K562 (cell line): ENCODE measurements at regions of chr9 and their contacts with region 1.

Region 1: GRCh38 chr9:92133949-92134604 is 18.9 kb upstream of the SPTLC1 start:
- DNase-seq: peak; percentile 83 to 87 (median 86)
- ATAC-seq: peak; percentile 84
- H3K4me3 ChIP-seq: no peak overlapping the region
- H3K27ac ChIP-seq: no peak overlapping the region
- H3K4me1 ChIP-seq: peaks cover 0 to 24% of the 10 kb centered on the region in 2 experiments; a peak in 4 of 5 replicates
- H3K27me3 ChIP-seq: peaks cover 0 to 10% of the 10 kb centered on the region in 2 experiments; a peak in 1 of 5 replicates
- CTCF ChIP-seq: peak; percentile 91 to 95 (median 91)
- EP300 ChIP-seq: no peak
- POLR2A ChIP-seq: no peak
- RAD21 ChIP-seq: peak; percentile 60 to 88

Region 2: GRCh38 chr9:91795598-91796241 is 338.4 kb before region 1 on chr9:
- CTCF ChIA-PET with region 1: no interaction called
- POLR2A ChIA-PET with region 1: no interaction called
- in situ Hi-C with region 1: no loop called
- intact Hi-C with region 1: no loop called
- DNase-seq: no peak
- ATAC-seq: no peak
- H3K4me3 ChIP-seq: no peak overlapping the region
- H3K27ac ChIP-seq: no peak overlapping the region
- H3K4me1 ChIP-seq: peaks cover 31 to 34% of the 10 kb centered on the region in 2 experiments
- H3K27me3 ChIP-seq: no peaks in the 10 kb centered on the region
- CTCF ChIP-seq: no peak
- EP300 ChIP-seq: no peak
- POLR2A ChIP-seq: no peak
- RAD21 ChIP-seq: no peak

Region 3: DNA sequence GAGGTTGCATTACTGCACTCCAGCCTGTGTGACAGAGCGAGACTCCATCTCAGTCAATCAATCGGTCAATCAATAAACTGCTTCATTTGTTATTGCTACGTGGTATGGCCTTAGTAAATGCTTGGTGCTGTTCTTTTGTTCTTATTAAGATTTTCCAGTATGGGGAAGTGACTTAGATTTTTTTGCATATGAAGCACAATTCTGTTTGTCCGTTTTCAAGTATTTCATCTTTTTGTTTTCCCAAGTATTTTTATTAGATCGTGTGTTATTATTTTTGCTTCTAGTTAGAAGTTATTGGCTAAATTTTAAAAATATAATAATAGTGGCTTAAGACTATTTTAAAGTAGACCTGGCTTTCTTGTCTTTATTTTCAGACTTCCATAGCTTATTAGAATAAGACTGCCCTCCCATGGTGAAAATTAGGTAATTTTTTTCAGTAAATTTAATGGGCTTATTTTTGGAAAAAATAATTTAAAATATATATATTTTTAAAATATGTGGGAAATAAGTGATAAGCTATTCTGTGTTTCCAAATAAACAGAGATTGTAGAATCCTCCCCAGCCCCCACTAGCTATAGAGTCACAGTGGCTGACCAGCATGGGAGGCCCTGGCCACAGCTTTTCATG is 304.9 kb after region 1 on chr9:
- CTCF ChIA-PET with region 1: interaction called, 5 read pairs
- POLR2A ChIA-PET with region 1: no interaction called
- in situ Hi-C with region 1: loop called (anchors 10 kb)
- intact Hi-C with region 1: no loop called
- DNase-seq: no peak
- ATAC-seq: no peak
- H3K4me3 ChIP-seq: no peak overlapping the region
- H3K27ac ChIP-seq: no peak overlapping the region
- H3K4me1 ChIP-seq: no peaks in the 10 kb centered on the region
- H3K27me3 ChIP-seq: no peaks in the 10 kb centered on the region
- CTCF ChIP-seq: peak in 2 of 3 experiments; percentile 9 to 53; a peak in 3 of 6 replicates
- EP300 ChIP-seq: no peak
- POLR2A ChIP-seq: no peak
- RAD21 ChIP-seq: peak; percentile 41 to 51

Region 4: DNA sequence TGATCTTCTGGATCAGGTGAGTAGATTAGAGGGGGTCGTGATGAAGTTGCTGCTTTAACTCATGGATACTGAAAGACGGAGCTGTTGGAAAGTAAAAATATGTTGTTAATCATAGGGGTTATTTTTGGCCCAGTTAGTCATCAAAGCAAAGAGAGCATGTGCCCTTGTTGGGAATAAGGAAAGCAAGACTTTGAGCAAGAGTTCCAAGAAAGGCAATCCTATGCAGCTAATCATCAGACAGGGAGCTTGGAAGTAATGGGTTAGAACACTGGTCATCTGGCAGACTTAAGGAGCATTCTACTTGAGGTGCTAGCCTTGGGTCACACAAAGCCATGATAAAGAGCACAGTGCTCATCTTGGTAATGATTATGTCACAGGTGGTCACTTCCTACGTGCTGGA is 329.9 kb after region 1 on chr9:
- CTCF ChIA-PET with region 1: no interaction called
- POLR2A ChIA-PET with region 1: no interaction called
- in situ Hi-C with region 1: no loop called
- intact Hi-C with region 1: loop called (anchors 10 kb)
- DNase-seq: no peak
- ATAC-seq: no peak
- H3K4me3 ChIP-seq: no peak overlapping the region
- H3K27ac ChIP-seq: no peak overlapping the region
- H3K4me1 ChIP-seq: no peaks in the 10 kb centered on the region
- H3K27me3 ChIP-seq: no peaks in the 10 kb centered on the region
- CTCF ChIP-seq: no peak
- EP300 ChIP-seq: no peak
- POLR2A ChIP-seq: no peak
- RAD21 ChIP-seq: no peak

Region 5: DNA sequence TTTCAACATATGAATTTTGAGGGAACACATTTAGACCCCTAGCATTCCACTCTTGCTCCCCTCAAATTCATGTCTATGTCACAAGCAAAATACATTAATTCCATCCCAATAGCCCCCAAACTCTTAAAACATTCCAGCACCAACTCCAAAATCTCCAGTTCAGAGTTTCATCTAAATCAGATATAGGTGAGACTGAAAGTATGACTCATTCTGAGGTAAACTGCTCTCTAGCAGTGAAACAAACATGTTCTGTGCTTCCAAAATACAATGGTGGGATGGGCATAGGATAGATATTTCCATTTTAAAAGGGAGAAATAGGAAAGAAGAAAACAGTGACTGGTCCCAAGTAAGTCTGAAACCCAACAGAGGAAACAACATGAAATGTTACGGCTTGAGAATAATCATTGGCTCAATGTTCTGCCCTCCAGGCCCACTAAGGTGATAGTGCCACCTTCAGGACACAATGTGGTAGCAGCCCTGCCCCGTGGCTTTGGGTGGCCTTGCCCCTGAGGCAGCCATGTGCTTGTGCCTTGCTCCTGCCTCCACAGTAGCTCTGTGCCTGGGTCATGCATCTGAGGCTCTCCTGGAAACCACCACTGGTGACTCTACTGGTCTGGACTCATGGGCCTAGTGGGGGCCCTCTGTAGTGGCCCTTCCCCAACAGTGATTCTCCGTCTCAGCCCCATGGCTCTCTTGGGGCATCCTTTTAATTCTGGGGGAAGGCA is 572.3 kb after region 1 on chr9:
- CTCF ChIA-PET with region 1: no interaction called
- POLR2A ChIA-PET with region 1: no interaction called
- in situ Hi-C with region 1: no loop called
- intact Hi-C with region 1: loop called (anchors 5 kb)
- DNase-seq: peak; percentile 17 to 47 (median 38)
- ATAC-seq: peak; percentile 96
- H3K4me3 ChIP-seq: no peak overlapping the region
- H3K27ac ChIP-seq: no peak overlapping the region
- H3K4me1 ChIP-seq: no peaks in the 10 kb centered on the region
- H3K27me3 ChIP-seq: no peaks in the 10 kb centered on the region
- CTCF ChIP-seq: peak; percentile 69 to 71 (median 70)
- EP300 ChIP-seq: no peak
- POLR2A ChIP-seq: no peak
- RAD21 ChIP-seq: peak in 1 of 2 experiments; percentile 63; a peak in 2 of 4 replicates